CD8-positive, alpha-beta T cell (primary cell): ENCODE measurements at regions of chr17 and their contacts with region 1.

Region 1: GRCh38 chr17:81238817-81239600 is at the starts of genes NDUFAF8 and TEPSIN:
- DNase-seq: peak; percentile 91 to 99 (median 95)
- ATAC-seq: peak; percentile 94
- H3K4me3 ChIP-seq: peak within 1 kb of the TSS; percentile 80 to 84
- H3K4me3 Mint-ChIP-seq: peak within 1 kb of the TSS; percentile 92
- H3K27ac ChIP-seq: peak within 1 kb of the TSS; percentile 51 to 68
- H3K27ac Mint-ChIP-seq: peak within 1 kb of the TSS; percentile 87
- H3K4me1 ChIP-seq: peaks cover 39% of the 10 kb centered on the region
- H3K4me1 Mint-ChIP-seq: peaks cover 43% of the 10 kb centered on the region
- H3K27me3 ChIP-seq: no peaks in the 10 kb centered on the region
- H3K27me3 Mint-ChIP-seq: no peaks in the 10 kb centered on the region
- CTCF ChIP-seq: no peak
- total RNA-seq, gene NDUFAF8: 40.6 to 50.9 TPM
- total RNA-seq, gene TEPSIN: 81.4 to 88.8 TPM

Region 2: GRCh38 chr17:80414803-80415625 is 824.0 kb before region 1 on chr17 and contains the start of gene ENDOV:
- CTCF ChIA-PET with region 1: no interaction called
- POLR2A ChIA-PET with region 1: no interaction called
- intact Hi-C with region 1: loop called in 1 of 2 experiments (anchors 10 kb)
- DNase-seq: peak; percentile 87 to 99 (median 95)
- ATAC-seq: peak; percentile 83
- H3K4me3 ChIP-seq: peak within 1 kb of the TSS; percentile 79 to 97
- H3K4me3 Mint-ChIP-seq: peak within 1 kb of the TSS; percentile 85
- H3K27ac ChIP-seq: peak within 1 kb of the TSS; percentile 82 to 87
- H3K27ac Mint-ChIP-seq: peak within 1 kb of the TSS; percentile 87
- H3K4me1 ChIP-seq: peaks cover 18% of the 10 kb centered on the region
- H3K4me1 Mint-ChIP-seq: peaks cover 26% of the 10 kb centered on the region
- H3K27me3 ChIP-seq: peaks cover 0 to 4% of the 10 kb centered on the region in 2 experiments
- H3K27me3 Mint-ChIP-seq: no peaks in the 10 kb centered on the region
- CTCF ChIP-seq: no peak
- total RNA-seq, gene ENDOV: 8.2 to 11.6 TPM

Region 3: GRCh38 chr17:81018044-81018802 is 220.8 kb before region 1 on chr17:
- CTCF ChIA-PET with region 1: no interaction called
- POLR2A ChIA-PET with region 1: no interaction called
- intact Hi-C with region 1: loop called in 1 of 2 experiments (anchors 1 kb)
- DNase-seq: peak in 7 of 9 experiments; percentile 23 to 74 (median 50)
- ATAC-seq: peak; percentile 79
- H3K4me3 ChIP-seq: peak overlapping the region; percentile 56 to 62
- H3K4me3 Mint-ChIP-seq: peak overlapping the region; percentile 78
- H3K27ac ChIP-seq: peak overlapping the region; percentile 53 to 87
- H3K27ac Mint-ChIP-seq: peak overlapping the region; percentile 94
- H3K4me1 ChIP-seq: peaks cover 24% of the 10 kb centered on the region
- H3K4me1 Mint-ChIP-seq: peaks cover 32% of the 10 kb centered on the region
- H3K27me3 ChIP-seq: no peaks in the 10 kb centered on the region
- H3K27me3 Mint-ChIP-seq: no peaks in the 10 kb centered on the region
- CTCF ChIP-seq: no peak

Region 4: GRCh38 chr17:81040791-81041337 is 198.1 kb before region 1 on chr17:
- CTCF ChIA-PET with region 1: no interaction called
- POLR2A ChIA-PET with region 1: no interaction called
- intact Hi-C with region 1: no loop called
- DNase-seq: peak in 4 of 9 experiments; percentile 20 to 44 (median 34)
- ATAC-seq: peak; percentile 67
- H3K4me3 ChIP-seq: no peak overlapping the region
- H3K4me3 Mint-ChIP-seq: no peak overlapping the region
- H3K27ac ChIP-seq: no peak overlapping the region
- H3K27ac Mint-ChIP-seq: no peak overlapping the region
- H3K4me1 ChIP-seq: peaks cover 3% of the 10 kb centered on the region
- H3K4me1 Mint-ChIP-seq: peaks cover 10% of the 10 kb centered on the region
- H3K27me3 ChIP-seq: no peaks in the 10 kb centered on the region
- H3K27me3 Mint-ChIP-seq: no peaks in the 10 kb centered on the region
- CTCF ChIP-seq: no peak

Region 5: GRCh38 chr17:81094509-81095382 is 144.3 kb before region 1 on chr17:
- CTCF ChIA-PET with region 1: no interaction called
- POLR2A ChIA-PET with region 1: no interaction called
- intact Hi-C with region 1: loop called in 1 of 2 experiments (anchors 1 kb)
- DNase-seq: peak; percentile 78 to 98 (median 92)
- ATAC-seq: peak; percentile 85
- H3K4me3 ChIP-seq: peak overlapping the region; percentile 17 to 28
- H3K4me3 Mint-ChIP-seq: peak overlapping the region; percentile 71
- H3K27ac ChIP-seq: peak overlapping the region; percentile 47 to 72
- H3K27ac Mint-ChIP-seq: peak overlapping the region; percentile 85
- H3K4me1 ChIP-seq: peaks cover 54% of the 10 kb centered on the region
- H3K4me1 Mint-ChIP-seq: peaks cover 48% of the 10 kb centered on the region
- H3K27me3 ChIP-seq: no peaks in the 10 kb centered on the region
- H3K27me3 Mint-ChIP-seq: no peaks in the 10 kb centered on the region
- CTCF ChIP-seq: no peak

Region 6: DNA sequence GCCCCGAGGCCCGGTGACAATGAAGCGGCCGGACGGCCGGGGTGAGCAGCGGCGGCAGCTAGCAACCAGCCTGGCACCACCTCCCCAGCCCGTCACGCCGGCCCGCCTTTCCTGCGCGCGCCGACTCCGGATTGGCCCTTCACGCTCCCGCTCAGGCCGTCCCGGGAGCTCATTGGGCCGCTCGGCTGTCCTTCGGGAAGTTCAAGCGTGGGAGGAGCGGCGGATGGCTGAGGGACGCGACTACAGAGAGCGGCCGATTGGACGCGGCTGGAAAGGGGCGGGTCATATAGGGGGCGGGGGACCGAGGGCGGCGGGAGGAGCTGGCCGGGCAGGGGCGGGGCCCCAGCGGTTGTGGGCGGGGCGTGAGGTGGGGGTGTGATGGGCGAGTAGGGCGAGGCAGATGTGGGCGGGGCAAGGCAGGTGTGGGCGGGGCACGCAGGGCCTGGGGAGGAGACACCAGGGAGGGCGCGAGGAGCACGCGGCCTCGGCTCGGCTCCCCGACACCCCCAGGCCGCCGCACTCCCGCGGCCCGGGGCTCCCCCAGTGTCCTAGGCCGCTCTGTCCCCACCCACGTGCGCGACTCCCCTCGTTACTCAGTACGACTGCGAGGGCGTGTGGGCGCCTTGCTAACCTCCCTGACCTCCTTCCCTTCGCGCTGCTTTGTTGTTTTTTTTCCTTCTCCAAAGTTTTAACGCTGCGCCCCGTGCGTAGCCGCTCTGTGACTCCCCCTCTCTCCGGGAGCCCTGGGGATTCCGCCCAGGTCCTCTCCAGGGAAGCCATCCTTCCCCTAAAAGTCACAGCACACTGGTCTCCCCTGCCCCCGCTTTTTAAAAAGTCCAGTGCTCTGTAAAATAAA is 15.9 kb before region 1 on chr17 and contains the start of gene CEP131:
- CTCF ChIA-PET with region 1: no interaction called
- POLR2A ChIA-PET with region 1: interaction called, 32 read pairs
- intact Hi-C with region 1: loop called in 1 of 2 experiments (anchors 1 kb)
- DNase-seq: peak; percentile 99 to 100 (median 99)
- ATAC-seq: peak; percentile 93
- H3K4me3 ChIP-seq: peak within 1 kb of the TSS; percentile 59 to 72
- H3K4me3 Mint-ChIP-seq: peak within 1 kb of the TSS; percentile 83
- H3K27ac ChIP-seq: peak within 1 kb of the TSS in 1 of 2 experiments; percentile 23
- H3K27ac Mint-ChIP-seq: peak within 1 kb of the TSS; percentile 45
- H3K4me1 ChIP-seq: peaks cover 20% of the 10 kb centered on the region
- H3K4me1 Mint-ChIP-seq: peaks cover 19% of the 10 kb centered on the region
- H3K27me3 ChIP-seq: no peaks in the 10 kb centered on the region
- H3K27me3 Mint-ChIP-seq: no peaks in the 10 kb centered on the region
- CTCF ChIP-seq: no peak
- total RNA-seq, gene CEP131: 8.5 to 10.3 TPM

Region 7: DNA sequence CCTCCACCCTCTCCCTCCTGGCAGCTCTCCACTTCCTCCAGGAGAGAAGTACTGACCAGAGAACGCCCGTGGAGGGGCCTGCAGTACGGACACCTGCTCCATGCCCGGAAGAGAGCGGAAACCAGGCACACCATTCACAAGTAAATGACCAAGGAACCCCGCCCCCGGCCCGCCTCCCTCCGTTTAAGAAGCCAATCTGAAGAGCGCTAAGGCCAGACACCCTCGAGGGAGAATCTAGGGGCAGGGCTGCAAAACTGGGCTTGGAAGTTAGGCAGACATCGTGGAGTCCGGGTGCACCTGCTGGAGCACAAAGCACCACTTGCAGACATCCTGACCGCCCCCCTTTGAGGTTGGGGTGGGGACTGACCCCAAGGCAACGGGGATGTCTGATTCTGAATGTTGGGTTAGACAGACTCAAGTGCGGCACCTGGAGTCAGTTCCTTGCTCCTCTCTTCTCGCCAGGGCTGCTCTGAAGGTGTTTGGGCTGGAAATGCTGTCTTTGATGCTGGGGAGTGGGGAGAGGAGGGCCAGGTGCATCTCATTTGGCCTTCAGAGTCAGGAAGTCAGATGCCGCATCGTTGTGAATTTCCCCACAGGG is 314.1 kb after region 1 on chr17:
- CTCF ChIA-PET with region 1: no interaction called
- POLR2A ChIA-PET with region 1: interaction called, 4 read pairs
- intact Hi-C with region 1: loop called in 1 of 2 experiments (anchors 2 kb)
- DNase-seq: peak; percentile 55 to 91 (median 79)
- ATAC-seq: peak; percentile 71
- H3K4me3 ChIP-seq: peak overlapping the region; percentile 92 to 96
- H3K4me3 Mint-ChIP-seq: peak overlapping the region; percentile 86
- H3K27ac ChIP-seq: peak overlapping the region; percentile 82 to 84
- H3K27ac Mint-ChIP-seq: peak overlapping the region; percentile 87
- H3K4me1 ChIP-seq: peaks cover 21% of the 10 kb centered on the region
- H3K4me1 Mint-ChIP-seq: peaks cover 31% of the 10 kb centered on the region
- H3K27me3 ChIP-seq: no peaks in the 10 kb centered on the region
- H3K27me3 Mint-ChIP-seq: no peaks in the 10 kb centered on the region
- CTCF ChIP-seq: no peak